PC-9 (cell line): ENCODE measurements at regions of chr15 and their contacts with region 1.

Region 1: DNA sequence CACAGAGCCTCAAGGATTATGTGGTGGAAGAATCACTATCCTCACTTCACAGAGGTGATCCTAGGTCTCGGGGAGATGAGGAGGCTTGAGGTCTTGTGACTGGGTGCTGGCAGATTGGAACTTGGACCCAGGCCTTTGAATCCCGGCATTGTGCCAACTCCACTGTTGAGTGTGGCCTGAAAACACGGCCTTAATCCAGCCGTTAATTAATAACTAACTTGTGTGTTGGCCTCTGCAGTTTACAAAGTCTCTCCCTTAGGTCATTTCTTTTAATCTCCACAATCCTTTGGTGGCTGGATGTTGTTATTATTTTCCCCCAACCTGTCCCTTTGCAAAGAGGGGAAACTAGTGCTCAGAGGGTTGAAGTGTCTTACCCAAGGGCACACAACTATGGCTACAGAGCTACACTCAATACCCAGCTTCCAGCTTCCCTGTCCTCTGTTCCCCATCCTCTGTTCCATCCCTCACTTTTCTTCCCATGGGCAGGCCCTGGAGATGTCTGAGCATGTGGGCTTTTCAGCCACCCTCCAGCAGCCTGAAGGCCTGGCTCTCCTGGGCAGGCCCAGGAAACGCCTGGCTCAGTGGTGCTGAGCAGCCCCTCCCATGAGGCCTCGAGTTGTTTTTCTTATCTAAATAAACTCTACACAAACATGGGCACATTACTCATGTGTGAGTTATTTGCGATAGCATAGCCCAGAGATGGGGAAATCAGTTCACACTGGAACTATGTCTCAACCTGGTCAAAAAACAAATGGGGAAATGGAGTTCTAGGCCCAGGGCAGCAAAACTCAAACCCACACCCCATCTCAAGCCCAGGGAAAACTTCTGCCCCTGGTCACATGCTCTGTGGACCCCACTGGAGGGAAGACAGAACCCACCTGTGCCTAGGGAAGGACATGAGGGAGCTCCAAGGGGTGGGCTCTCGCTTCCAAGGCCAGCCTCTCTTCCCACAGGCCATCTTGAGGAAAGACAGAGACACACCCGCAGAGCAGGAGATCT is 16.8 kb upstream of the SMAD3 start:
- DNase-seq: peak; percentile 73 to 93
- H3K4me3 ChIP-seq: no peak overlapping the region
- H3K27ac ChIP-seq: peak overlapping the region; percentile 98
- H3K4me1 ChIP-seq: peaks cover 44% of the 10 kb centered on the region
- H3K27me3 ChIP-seq: no peaks in the 10 kb centered on the region
- CTCF ChIP-seq: no peak

Region 2: GRCh38 chr15:66883322-66883911 is 165.2 kb before region 1 on chr15:
- CTCF ChIA-PET with region 1: interaction called, 5 read pairs
- POLR2A ChIA-PET with region 1: no interaction called
- intact Hi-C with region 1: loop called (anchors 10 kb)
- DNase-seq: peak; percentile 96 to 97
- H3K4me3 ChIP-seq: no peak overlapping the region
- H3K27ac ChIP-seq: peak overlapping the region; percentile 74
- H3K4me1 ChIP-seq: peaks cover 35% of the 10 kb centered on the region
- H3K27me3 ChIP-seq: no peaks in the 10 kb centered on the region
- CTCF ChIP-seq: no peak

Region 3: GRCh38 chr15:66955871-66956585 is 92.6 kb before region 1 on chr15:
- CTCF ChIA-PET with region 1: no interaction called
- POLR2A ChIA-PET with region 1: no interaction called
- intact Hi-C with region 1: no loop called
- DNase-seq: peak; percentile 75 to 89
- H3K4me3 ChIP-seq: no peak overlapping the region
- H3K27ac ChIP-seq: peak overlapping the region; percentile 62
- H3K4me1 ChIP-seq: peaks cover 23% of the 10 kb centered on the region
- H3K27me3 ChIP-seq: no peaks in the 10 kb centered on the region
- CTCF ChIP-seq: no peak

Region 4: DNA sequence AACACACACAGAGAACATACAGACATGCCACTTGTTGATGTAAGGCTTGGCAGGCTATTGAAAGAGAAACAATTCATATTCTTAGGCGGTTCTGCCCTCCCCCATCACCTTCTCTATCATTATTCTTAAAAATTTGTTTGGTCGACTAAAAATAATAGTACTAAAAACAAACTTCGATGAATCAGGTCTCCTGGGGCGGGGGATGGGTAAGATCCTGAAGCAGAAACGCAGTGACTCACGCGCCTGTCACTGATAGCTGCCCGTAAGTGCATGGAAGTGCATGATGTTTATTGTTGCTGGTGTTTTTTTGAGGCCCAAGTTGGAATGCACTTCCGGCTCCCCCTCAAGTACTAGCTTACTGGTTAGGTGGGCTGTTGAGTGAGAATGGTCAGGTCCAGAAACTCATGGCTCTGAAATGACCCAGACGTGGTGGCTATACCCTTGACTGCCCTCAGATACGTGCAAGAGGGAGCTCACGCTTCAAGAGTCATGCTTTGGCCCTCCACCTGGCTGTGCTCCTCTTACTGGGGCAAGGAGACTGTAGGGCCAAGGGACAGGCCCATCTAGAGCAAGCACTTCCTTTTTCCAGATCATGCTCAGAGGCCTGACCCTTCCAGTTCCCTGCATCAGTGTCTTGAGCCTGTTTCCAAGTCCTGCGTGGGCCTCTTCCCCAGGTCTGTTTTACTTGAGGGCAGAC is 27.7 kb after region 1 on chr15:
- CTCF ChIA-PET with region 1: no interaction called
- POLR2A ChIA-PET with region 1: no interaction called
- intact Hi-C with region 1: loop called (anchors 1 kb)
- DNase-seq: peak in 1 of 2 experiments; percentile 62
- H3K4me3 ChIP-seq: no peak overlapping the region
- H3K27ac ChIP-seq: peak overlapping the region; percentile 43; the same call in 1 of the 2 replicates
- H3K4me1 ChIP-seq: peaks cover 97% of the 10 kb centered on the region
- H3K27me3 ChIP-seq: no peaks in the 10 kb centered on the region
- CTCF ChIP-seq: no peak

Region 5: DNA sequence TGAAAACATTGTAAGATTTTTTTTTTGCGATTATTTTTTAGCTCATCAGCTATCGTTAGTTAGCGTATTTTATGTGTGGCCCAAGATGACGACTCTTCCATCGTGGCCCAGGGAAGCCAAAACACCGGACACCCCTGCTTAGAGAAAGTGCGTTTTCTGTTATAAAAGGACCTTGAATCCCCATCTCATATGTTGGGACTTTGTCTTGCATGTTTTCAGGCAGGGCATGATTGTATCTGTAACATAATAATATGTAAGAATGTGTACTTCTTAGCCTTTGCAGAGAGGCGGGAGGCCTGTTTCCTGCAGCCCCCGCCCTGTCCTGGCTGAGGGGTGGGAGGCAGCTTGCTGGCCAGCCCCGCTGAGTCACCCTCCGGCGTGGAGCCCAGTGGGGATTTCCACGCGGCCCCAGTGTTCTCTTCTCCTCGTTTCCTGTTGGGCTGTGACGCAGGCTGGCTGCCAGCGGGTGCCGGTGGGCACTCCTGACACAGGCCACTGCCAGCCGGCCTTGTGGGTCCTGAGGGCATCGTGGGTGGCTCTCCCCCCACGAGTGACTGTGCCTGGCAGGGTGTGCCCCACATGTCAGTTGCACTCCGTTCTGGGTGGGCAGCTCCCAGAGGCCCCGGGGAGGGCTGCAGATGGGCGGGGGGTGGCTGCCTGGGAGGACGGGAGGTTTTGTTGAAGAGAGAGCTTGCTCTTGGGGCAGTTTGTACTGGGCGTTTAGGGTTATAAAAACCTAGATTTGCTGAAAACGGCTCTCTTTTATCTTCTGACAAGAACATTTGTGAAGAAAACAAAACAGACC is 72.5 kb after region 1 on chr15:
- CTCF ChIA-PET with region 1: interaction called, 3 read pairs
- POLR2A ChIA-PET with region 1: interaction called, 3 read pairs
- intact Hi-C with region 1: loop called (anchors 1 kb)
- DNase-seq: peak in 1 of 2 experiments; percentile 56
- H3K4me3 ChIP-seq: no peak overlapping the region
- H3K27ac ChIP-seq: peak overlapping the region; percentile 98; the same call in 1 of the 2 replicates
- H3K4me1 ChIP-seq: peaks cover 76% of the 10 kb centered on the region
- H3K27me3 ChIP-seq: no peaks in the 10 kb centered on the region
- CTCF ChIP-seq: no peak

Region 6: GRCh38 chr15:67175643-67176071 is 127.1 kb after region 1 on chr15:
- CTCF ChIA-PET with region 1: no interaction called
- POLR2A ChIA-PET with region 1: interaction called, 3 read pairs
- intact Hi-C with region 1: loop called (anchors 1 kb)
- DNase-seq: no peak
- H3K4me3 ChIP-seq: no peak overlapping the region
- H3K27ac ChIP-seq: peak overlapping the region; percentile 85
- H3K4me1 ChIP-seq: peaks cover 60% of the 10 kb centered on the region
- H3K27me3 ChIP-seq: no peaks in the 10 kb centered on the region
- CTCF ChIP-seq: no peak

Region 7: GRCh38 chr15:67212684-67213367 is 164.2 kb after region 1 on chr15:
- CTCF ChIA-PET with region 1: no interaction called
- POLR2A ChIA-PET with region 1: no interaction called
- intact Hi-C with region 1: no loop called
- DNase-seq: no peak
- H3K4me3 ChIP-seq: no peak overlapping the region
- H3K27ac ChIP-seq: no peak overlapping the region
- H3K4me1 ChIP-seq: no peaks in the 10 kb centered on the region
- H3K27me3 ChIP-seq: no peaks in the 10 kb centered on the region
- CTCF ChIP-seq: no peak